Caco-2 (cell line): ENCODE measurements at regions of chr17 and their contacts with region 1.

Region 1: DNA sequence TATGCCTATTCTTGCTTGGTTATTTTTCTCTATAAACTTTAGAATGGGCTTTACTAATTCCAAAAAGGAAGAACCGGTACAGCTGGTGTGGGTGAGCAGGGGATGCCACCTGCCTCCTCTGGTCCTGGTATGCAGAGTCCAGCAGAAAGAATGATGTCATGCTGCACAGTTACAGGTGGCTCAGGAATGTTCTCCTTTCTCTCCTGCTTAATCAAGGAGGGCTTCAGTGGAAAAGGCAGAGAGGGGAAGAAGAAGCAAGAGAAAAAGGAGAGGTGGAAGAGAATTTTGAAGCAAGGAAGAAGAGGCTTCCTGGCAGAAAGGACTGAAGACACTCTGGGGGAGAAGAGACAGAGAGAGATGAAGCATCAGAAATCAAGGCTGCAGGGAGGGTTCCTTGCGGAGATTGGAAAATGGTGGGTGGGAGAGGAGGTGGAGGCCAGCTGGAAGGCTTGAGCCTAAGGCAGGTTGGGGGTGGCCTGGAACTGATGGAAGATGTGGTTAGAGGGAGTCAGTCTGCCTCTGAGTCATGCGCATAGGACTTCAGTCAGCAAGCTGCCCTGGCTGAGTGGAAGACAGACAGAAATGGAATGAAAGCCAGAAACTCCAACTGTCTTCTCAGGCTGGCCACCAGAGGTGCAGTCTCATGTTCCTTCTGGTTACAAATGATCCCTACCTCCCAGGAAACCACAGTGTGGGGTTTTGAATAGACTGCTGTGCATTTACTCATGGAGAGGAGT is 64.6 kb upstream of the CRHR1 start:
- DNase-seq: peak in 1 of 2 experiments; percentile 46
- H3K4me3 ChIP-seq: no peak overlapping the region
- H3K4me3 Mint-ChIP-seq: no peak overlapping the region
- H3K27ac Mint-ChIP-seq: no peak overlapping the region
- H3K4me1 ChIP-seq: 0 out of 2 replicates have a peak, but pooled peaks cover 4% of the 10 kb centered on the region
- H3K4me1 Mint-ChIP-seq: no peaks in the 10 kb centered on the region
- H3K27me3 ChIP-seq: no peaks in the 10 kb centered on the region
- H3K27me3 Mint-ChIP-seq: peaks cover 25% of the 10 kb centered on the region
- CTCF ChIP-seq: peak; percentile 35 to 65

Region 2: DNA sequence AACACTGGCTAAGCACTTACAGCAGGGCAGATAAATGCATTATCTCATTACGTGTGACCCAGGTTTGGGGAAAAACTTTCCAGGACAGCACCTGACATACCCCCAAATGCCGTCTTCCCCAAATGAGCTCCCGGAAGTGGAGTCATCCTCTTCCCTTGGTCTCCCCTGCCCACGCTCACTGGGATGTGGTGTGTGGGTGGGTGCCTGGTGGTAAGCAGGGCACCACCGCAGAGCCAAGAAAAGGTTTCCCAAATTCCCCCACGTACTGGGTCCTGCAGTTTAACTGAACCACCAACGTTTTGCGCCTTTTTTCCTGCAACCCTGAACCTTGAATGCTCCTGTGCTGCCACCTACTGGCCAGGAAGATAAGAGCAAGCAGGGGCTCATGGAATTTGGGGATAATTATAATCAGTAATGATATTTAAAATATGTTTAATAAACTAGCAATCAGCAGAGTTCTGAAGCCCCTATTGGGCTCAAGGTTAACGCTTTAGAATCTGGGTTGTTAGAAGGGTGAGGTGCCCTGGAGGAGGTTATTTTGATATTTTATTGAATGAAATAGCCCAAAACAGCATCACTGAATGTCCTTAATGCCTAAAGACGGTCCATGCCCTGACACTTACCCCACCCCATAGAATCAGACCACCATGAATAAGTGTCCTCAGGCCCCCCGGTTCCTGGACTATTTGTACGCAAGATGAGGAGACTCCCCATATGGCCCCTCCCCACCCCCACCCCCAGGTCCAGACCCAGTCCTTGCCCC is 133.2 kb after region 1 on chr17:
- CTCF ChIA-PET with region 1: interaction called, 4 read pairs
- POLR2A ChIA-PET with region 1: no interaction called
- intact Hi-C with region 1: loop called (anchors 5 kb)
- DNase-seq: peak; percentile 66 to 76
- H3K4me3 ChIP-seq: no peak overlapping the region
- H3K4me3 Mint-ChIP-seq: no peak overlapping the region
- H3K27ac Mint-ChIP-seq: no peak overlapping the region
- H3K4me1 ChIP-seq: peaks cover 1% of the 10 kb centered on the region; the same call in 1 of the 2 replicates
- H3K4me1 Mint-ChIP-seq: peaks cover 1% of the 10 kb centered on the region
- H3K27me3 ChIP-seq: no peaks in the 10 kb centered on the region; the same call in 1 of the 2 replicates
- H3K27me3 Mint-ChIP-seq: peaks cover 14% of the 10 kb centered on the region
- CTCF ChIP-seq: peak; percentile 90 to 92